Psoas muscle (tissue), 8 donors: ENCODE measurements at regions of chr12 and their contacts with region 1.

Region 1: DNA sequence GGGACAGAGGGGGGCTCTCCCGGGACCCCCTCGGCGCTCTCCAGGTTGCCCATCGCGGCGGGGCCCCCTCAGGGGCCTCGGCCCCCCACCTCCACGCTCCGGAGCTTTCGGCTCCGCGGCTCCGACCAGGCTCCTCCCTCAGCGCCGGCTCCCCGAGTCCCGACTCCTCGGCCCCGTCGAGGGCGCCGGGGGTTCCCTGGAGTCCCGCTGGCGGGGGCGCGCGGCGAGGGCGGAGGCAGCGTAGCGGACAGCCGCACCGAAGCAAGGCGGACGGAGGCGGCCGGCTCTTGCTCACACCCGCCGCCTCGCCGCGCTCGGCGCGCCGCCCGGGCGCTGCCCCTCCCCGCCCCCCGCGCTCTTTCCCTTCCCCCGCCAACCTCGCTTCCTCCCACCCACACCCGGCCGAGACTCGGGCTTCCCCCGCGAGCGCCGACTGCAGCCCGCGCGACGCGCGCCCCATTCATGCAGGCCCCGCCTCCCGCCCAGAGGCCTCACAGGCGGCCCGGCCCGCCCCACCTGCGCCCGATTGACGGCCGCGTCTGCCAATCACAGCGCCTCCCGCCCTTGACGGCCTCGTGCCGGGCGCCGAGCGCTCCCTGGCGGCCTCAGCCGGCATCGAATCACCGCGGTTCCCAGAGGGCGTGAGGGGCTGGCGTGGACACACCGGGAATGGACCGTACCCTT is at the start of gene FMNL3:
- DNase-seq: peak; percentile 98 to 99
- ATAC-seq: peak; percentile 99
- H3K4me3 ChIP-seq: peak within 1 kb of the TSS; percentile 79
- H3K27ac ChIP-seq: peak within 1 kb of the TSS; percentile 71
- H3K4me1 ChIP-seq: peaks cover 18% of the 10 kb centered on the region
- H3K27me3 ChIP-seq: peaks cover 0 to 53% (median 3%) of the 10 kb centered on the region in 3 donors
- CTCF ChIP-seq: peak; percentile 95
- total RNA-seq, gene FMNL3: 5.5 to 11.3 (median 7.8) TPM

Region 2: DNA sequence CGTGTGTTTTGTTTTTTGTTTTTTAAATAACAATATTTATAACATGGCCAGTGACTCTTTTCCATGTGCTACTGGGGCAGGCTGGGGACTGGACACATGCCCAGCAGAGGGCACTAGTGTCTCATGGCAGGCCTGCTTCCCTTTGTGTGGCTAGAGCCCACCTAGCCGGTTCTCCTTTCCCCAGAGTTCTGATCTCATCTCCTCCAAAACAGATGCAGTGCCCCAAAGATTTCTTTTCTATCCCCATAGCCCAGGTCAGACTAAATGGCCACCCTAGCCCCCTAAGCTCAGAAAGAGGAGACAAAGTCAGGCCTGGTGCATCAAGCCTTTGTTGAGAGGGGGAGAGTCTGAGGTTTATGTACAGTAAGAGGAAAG is 62.7 kb before region 1 on chr12:
- intact Hi-C with region 1: loop called (anchors 1 kb)
- DNase-seq: peak; percentile 81 to 87
- ATAC-seq: peak; percentile 68 to 87 (median 77)
- H3K4me3 ChIP-seq: no peak overlapping the region
- H3K27ac ChIP-seq: no peak overlapping the region
- H3K4me1 ChIP-seq: peaks cover 8% of the 10 kb centered on the region
- H3K27me3 ChIP-seq: no peaks in the 10 kb centered on the region
- CTCF ChIP-seq: peak; percentile 95

Region 3: GRCh38 chr12:49673446-49674317 is 33.6 kb before region 1 on chr12:
- intact Hi-C with region 1: loop called in 1 of 2 experiments (anchors 5 kb)
- DNase-seq: peak; percentile 89 to 95
- ATAC-seq: peak; percentile 94 to 97 (median 96)
- H3K4me3 ChIP-seq: peak overlapping the region; percentile 23
- H3K27ac ChIP-seq: peak overlapping the region; percentile 85
- H3K4me1 ChIP-seq: peaks cover 59% of the 10 kb centered on the region
- H3K27me3 ChIP-seq: no peaks in the 10 kb centered on the region
- CTCF ChIP-seq: peak; percentile 46